ENCODE measurements at regions of chr7 and their contacts with region 1.

Region 1: DNA sequence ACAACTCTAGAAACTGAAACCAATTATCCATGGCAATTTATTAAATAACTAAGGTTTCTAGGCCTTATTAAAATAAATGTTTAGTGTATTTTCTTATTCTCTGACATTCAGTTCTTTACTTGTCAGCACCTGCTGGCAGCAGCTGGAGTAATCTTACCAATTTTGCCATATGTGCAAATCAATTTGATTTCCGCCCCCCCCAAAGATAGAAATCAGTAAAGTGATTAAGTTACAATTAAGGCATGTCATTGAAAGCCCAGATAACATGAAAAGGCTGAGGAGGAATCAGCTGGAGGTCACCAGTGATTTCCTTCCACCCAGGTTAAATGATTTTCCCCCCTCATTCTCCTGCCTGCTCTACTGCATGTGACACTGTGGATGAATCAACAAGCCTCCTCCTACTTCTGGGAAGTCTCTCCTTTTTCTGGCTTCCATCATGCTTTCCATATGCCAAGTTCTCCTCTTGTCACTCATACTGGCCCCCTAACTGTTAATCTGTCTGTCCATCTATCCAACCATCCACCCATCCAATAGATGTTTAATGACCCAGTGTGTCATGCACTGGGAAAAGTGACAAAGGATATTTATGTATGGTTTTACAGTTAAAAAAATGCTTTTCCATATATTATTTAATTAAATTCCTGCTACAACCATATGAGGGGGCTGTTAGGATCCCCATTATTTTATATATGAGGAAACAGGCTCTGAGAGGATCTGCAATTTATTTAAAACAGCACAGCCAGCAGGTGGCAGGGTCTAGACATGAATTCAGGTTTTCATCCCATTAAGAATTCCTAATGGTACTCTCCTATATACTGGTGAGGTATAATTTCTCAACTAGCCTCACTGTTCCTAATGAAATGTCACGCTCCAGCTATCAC is 116.5 kb downstream of the ATXN7L1 start:
- DNase-seq: peak in 2 of 9 donors; percentile 21 to 24
- ATAC-seq: peak; percentile 52
- H3K4me3 ChIP-seq: no peak overlapping the region
- H3K4me3 Mint-ChIP-seq: peak overlapping the region in 8 of 10 donors; percentile 1 to 82 (median 54)
- H3K27ac ChIP-seq: no peak overlapping the region
- H3K27ac Mint-ChIP-seq: peak overlapping the region in 8 of 9 donors; percentile 32 to 90 (median 76)
- H3K4me1 ChIP-seq: peaks cover 31 to 32% of the 10 kb centered on the region in 2 donors
- H3K4me1 Mint-ChIP-seq: peaks cover 22 to 53% (median 43%) of the 10 kb centered on the region in 7 donors
- H3K27me3 ChIP-seq: no peaks in the 10 kb centered on the region
- H3K27me3 Mint-ChIP-seq: peaks cover 0 to 11% (median 0%) of the 10 kb centered on the region in 5 donors

Region 2: DNA sequence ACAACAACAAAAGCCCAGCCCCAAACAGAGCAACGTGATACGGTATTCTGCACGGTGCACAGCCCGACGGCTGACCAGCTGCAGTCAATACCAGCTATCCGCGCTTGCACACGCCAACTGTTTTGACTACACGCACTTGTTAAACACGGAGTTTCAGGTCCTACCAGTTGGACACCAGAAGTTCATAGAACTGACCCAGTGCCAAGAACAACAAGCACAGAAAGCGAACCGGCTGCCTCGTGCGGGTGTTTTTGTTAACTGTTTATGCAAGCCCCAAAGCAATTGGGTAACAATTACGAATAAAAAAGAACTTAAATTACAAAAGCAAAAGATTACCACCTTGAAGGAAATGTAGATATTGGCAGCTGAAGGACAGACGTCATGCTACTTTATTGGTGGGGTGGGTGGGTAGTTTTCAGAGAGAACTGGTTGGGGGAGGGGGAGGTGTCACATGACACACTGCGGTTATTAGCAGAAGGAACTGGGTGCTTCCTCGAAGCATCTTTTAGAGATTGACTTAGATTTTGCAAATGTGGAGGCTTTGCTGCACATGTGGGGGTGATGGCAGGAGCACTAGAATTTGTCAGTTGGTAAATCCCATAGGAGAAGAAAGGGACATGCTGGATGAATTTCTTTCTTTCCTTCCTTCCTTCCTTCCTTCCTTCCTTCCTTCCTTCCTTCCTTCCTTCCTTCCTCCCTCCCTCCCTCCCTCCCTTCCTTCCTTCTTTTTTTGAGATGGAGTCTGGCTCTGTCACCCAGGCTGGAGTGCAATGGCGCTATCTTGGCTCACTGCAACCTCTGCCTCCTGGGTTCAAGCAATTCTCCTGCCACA is 68.0 kb before region 1 on chr7:
- CTCF ChIA-PET with region 1: interaction called, 6 read pairs
- POLR2A ChIA-PET with region 1: interaction called, 12 read pairs
- intact Hi-C with region 1: loop called (anchors 1 to 5 kb)
- DNase-seq: peak; percentile 22 to 94 (median 90)
- ATAC-seq: peak; percentile 89
- H3K4me3 ChIP-seq: peak overlapping the region; percentile 94
- H3K4me3 Mint-ChIP-seq: peak overlapping the region; percentile 84 to 98 (median 92)
- H3K27ac ChIP-seq: peak overlapping the region; percentile 83
- H3K27ac Mint-ChIP-seq: peak overlapping the region; percentile 95 to 100 (median 99)
- H3K4me1 ChIP-seq: peaks cover 19 to 21% of the 10 kb centered on the region in 2 donors
- H3K4me1 Mint-ChIP-seq: peaks cover 33 to 78% (median 65%) of the 10 kb centered on the region in 7 donors
- H3K27me3 ChIP-seq: no peaks in the 10 kb centered on the region
- H3K27me3 Mint-ChIP-seq: no peaks in the 10 kb centered on the region

Region 3: DNA sequence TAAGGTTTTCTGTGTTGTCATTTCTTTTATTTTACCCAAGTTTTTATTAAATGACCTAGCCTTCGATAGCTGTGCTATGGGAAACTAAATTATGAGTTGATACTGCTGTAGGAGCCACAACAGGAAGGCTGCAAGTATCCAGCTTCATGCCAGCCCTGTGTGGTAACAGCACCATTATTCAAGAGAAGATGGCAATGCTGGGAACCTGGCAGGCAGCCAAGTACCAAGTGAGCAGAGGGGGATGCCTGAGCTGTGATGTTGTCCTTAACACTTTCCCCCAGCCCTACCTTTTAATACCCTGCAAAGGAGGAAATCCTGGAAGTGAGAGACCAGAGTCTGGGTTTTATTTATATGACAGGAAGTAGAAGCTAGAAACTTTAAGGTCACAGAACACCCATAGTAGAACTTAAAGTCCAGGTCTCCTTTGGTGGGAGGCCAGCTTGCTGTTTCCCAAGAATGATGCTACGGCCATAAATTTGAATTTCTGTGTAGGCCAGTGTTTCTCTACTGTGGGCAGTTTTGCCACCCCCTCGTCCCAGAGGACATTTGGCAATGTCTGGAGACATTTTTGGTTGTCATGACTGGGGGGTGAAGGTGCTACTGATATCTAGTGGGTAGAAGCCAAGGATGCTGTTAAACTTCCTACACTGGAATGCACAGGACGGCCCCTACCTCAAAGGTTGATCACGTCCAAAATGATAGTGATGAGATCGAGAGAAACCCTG is 125.6 kb after region 1 on chr7:
- CTCF ChIA-PET with region 1: interaction called, 10 read pairs
- POLR2A ChIA-PET with region 1: no interaction called
- intact Hi-C with region 1: no loop called
- DNase-seq: peak in 4 of 9 donors; percentile 11 to 30 (median 23)
- ATAC-seq: no peak
- H3K4me3 ChIP-seq: no peak overlapping the region
- H3K4me3 Mint-ChIP-seq: peak overlapping the region in 4 of 10 donors; percentile 3 to 52 (median 28)
- H3K27ac ChIP-seq: no peak overlapping the region
- H3K27ac Mint-ChIP-seq: peak overlapping the region in 7 of 9 donors; percentile 49 to 87 (median 61)
- H3K4me1 ChIP-seq: peaks cover 4 to 26% of the 10 kb centered on the region in 2 donors
- H3K4me1 Mint-ChIP-seq: peaks cover 7 to 72% (median 60%) of the 10 kb centered on the region in 7 donors
- H3K27me3 ChIP-seq: no peaks in the 10 kb centered on the region
- H3K27me3 Mint-ChIP-seq: peaks cover 0 to 17% (median 0%) of the 10 kb centered on the region in 5 donors

Region 4: GRCh38 chr7:106009403-106010226 is 249.7 kb after region 1 on chr7:
- CTCF ChIA-PET with region 1: interaction called, 56 read pairs
- POLR2A ChIA-PET with region 1: interaction called, 8 read pairs
- intact Hi-C with region 1: loop called (anchors 1 kb)
- DNase-seq: peak; percentile 73 to 85 (median 81)
- ATAC-seq: peak; percentile 99
- H3K4me3 ChIP-seq: no peak overlapping the region
- H3K4me3 Mint-ChIP-seq: peak overlapping the region in 9 of 10 donors; percentile 36 to 69 (median 55)
- H3K27ac ChIP-seq: no peak overlapping the region
- H3K27ac Mint-ChIP-seq: peak overlapping the region in 7 of 9 donors; percentile 38 to 93 (median 86)
- H3K4me1 ChIP-seq: peaks cover 0 to 30% of the 10 kb centered on the region in 2 donors
- H3K4me1 Mint-ChIP-seq: peaks cover 17 to 51% (median 45%) of the 10 kb centered on the region in 7 donors
- H3K27me3 ChIP-seq: no peaks in the 10 kb centered on the region
- H3K27me3 Mint-ChIP-seq: peaks cover 0 to 42% (median 0%) of the 10 kb centered on the region in 5 donors

Region 5: DNA sequence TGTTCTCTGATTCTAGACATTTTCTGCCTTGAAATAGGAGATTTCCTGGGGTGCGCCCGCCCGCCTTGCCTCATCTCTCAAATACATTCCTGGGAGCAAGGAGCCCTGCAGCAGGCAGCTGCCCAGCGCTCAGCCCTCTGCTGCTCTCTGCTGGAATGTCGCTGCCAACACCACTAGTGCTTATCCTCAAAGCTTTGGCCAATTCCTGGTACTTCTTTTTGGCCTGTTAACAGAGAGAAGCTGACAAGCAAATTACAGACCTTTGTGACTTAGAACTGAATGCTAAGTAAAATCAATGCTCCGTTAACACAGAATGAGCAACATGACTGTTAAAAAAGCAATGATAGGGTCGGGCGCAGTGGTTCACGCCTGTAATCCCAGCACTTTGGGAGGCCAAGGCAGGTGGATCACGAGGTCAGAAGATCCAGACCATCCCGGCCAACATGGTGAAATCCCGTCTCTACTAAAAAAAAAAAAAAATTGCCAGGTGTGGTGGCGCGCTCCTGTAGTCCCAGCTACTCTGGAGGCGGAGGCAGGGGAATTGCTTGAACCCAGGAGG is 394.1 kb after region 1 on chr7:
- CTCF ChIA-PET with region 1: interaction called, 4 read pairs
- POLR2A ChIA-PET with region 1: no interaction called
- intact Hi-C with region 1: loop called (anchors 5 to 10 kb)
- DNase-seq: peak; percentile 51 to 76 (median 66)
- ATAC-seq: peak; percentile 95
- H3K4me3 ChIP-seq: no peak overlapping the region
- H3K4me3 Mint-ChIP-seq: peak overlapping the region in 8 of 10 donors; percentile 7 to 76 (median 58)
- H3K27ac ChIP-seq: no peak overlapping the region
- H3K27ac Mint-ChIP-seq: peak overlapping the region in 1 of 9 donors; percentile 82
- H3K4me1 ChIP-seq: peaks cover 0 to 8% of the 10 kb centered on the region in 2 donors
- H3K4me1 Mint-ChIP-seq: peaks cover 0 to 13% (median 8%) of the 10 kb centered on the region in 7 donors
- H3K27me3 ChIP-seq: peaks cover 0 to 4% of the 10 kb centered on the region in 2 donors
- H3K27me3 Mint-ChIP-seq: peaks cover 0 to 33% (median 22%) of the 10 kb centered on the region in 5 donors